ENCODE measurements at regions of chr15 and their contacts with region 1.

Region 1: GRCh38 chr15:55518641-55519040 is 10.6 kb upstream of the DNAAF4 start:
- DNase-seq: no peak
- ATAC-seq: no peak
- H3K4me3 ChIP-seq: no peak overlapping the region
- H3K27ac ChIP-seq: no peak overlapping the region
- H3K4me1 ChIP-seq: no peaks in the 10 kb centered on the region
- H3K27me3 ChIP-seq: peaks cover 0 to 5% (median 0%) of the 10 kb centered on the region in 7 donors
- CTCF ChIP-seq: peak in 1 of 9 donors; percentile 15

Region 2: GRCh38 chr15:55630858-55631257 is 112.2 kb after region 1 on chr15:
- intact Hi-C with region 1: loop called in 1 of 10 experiments (anchors 10 kb)
- DNase-seq: no peak
- ATAC-seq: no peak
- H3K4me3 ChIP-seq: no peak overlapping the region
- H3K27ac ChIP-seq: no peak overlapping the region
- H3K4me1 ChIP-seq: no peaks in the 10 kb centered on the region
- H3K27me3 ChIP-seq: no peaks in the 10 kb centered on the region
- CTCF ChIP-seq: no peak